Sciatic nerve (tissue), 2 donors: ENCODE measurements at regions of chr5 and their contacts with region 1.

Region 1: GRCh38 chr5:137310051-137310730 is 188.9 kb downstream of the SPOCK1 start:
- DNase-seq: no peak
- ATAC-seq: no peak

Region 2: GRCh38 chr5:137501846-137502406 is 191.7 kb after region 1 on chr5:
- intact Hi-C with region 1: loop called (anchors 10 kb)
- DNase-seq: no peak
- ATAC-seq: no peak